HCT116 (cell line): ENCODE measurements at regions of chr1 and their contacts with region 1.

Region 1: GRCh38 chr1:34742667-34743270 is 12.1 kb upstream of the GJB5 start:
- DNase-seq: peak; percentile 59
- ATAC-seq: peak; percentile 99
- H3K4me3 ChIP-seq: no peak overlapping the region
- H3K27ac ChIP-seq: no peak overlapping the region
- H3K4me1 ChIP-seq: peaks cover 3 to 13% of the 10 kb centered on the region in 2 experiments; a peak in 3 of 4 replicates
- H3K27me3 ChIP-seq: no peaks in the 10 kb centered on the region
- CTCF ChIP-seq: peak; percentile 88 to 96 (median 94)
- POLR2A ChIP-seq: no peak
- RAD21 ChIP-seq: peak; percentile 99

Region 2: DNA sequence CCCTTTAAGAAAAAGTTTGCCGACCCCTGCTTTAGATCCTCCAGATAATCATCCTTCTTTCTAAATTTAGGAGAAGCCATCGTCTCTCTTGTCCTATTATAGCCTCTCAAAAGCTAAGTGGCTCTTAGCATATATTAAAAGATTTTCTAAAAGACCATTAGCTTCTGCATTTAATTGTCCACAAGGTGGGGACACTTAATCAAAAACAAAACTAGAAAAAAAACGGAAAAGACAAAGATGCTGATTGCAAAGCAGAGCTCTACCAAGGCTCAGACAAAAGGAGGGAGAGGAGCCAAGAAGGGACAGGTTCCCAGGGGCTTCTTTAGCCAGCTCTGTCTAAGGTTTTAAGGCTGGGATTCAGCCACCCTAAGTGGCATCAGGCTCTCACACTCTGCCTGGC is 1007.1 kb before region 1 on chr1:
- CTCF ChIA-PET with region 1: interaction called, 5 read pairs
- POLR2A ChIA-PET with region 1: no interaction called
- RAD21 ChIA-PET with region 1: no interaction called
- intact Hi-C with region 1: loop called (anchors 10 kb)
- DNase-seq: peak; percentile 1
- ATAC-seq: 0 out of 2 replicates have a peak, but pooled peaks have one; percentile 32
- H3K4me3 ChIP-seq: no peak overlapping the region
- H3K27ac ChIP-seq: no peak overlapping the region
- H3K4me1 ChIP-seq: no peaks in the 10 kb centered on the region
- H3K27me3 ChIP-seq: peaks cover 69% of the 10 kb centered on the region
- CTCF ChIP-seq: peak; percentile 14 to 53 (median 37); a peak in 3 of 6 replicates
- POLR2A ChIP-seq: no peak
- RAD21 ChIP-seq: peak; percentile 60

Region 3: DNA sequence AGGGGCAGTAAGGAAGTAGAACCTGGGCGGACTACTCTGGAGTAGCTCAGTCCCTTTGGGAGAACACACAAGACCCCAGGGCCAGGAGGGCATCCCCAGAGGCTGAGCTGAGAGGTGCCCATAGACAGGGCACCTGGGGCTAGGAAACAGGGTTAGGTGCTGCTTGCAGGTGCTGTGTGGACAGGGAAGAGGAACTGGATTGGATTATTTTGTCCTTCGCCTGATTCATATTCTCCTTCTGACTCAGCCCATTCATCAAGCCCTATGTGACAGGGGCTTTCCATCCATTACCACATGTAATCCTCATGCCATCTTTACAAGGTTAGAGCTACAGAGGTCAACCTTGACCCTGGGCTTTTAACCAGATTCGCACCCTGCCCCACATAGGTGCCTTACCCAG is 382.2 kb before region 1 on chr1:
- CTCF ChIA-PET with region 1: no interaction called
- POLR2A ChIA-PET with region 1: no interaction called
- RAD21 ChIA-PET with region 1: no interaction called
- intact Hi-C with region 1: no loop called
- DNase-seq: no peak
- ATAC-seq: no peak
- H3K4me3 ChIP-seq: no peak overlapping the region
- H3K27ac ChIP-seq: no peak overlapping the region
- H3K4me1 ChIP-seq: no peaks in the 10 kb centered on the region
- H3K27me3 ChIP-seq: peaks cover 51% of the 10 kb centered on the region
- CTCF ChIP-seq: no peak
- POLR2A ChIP-seq: no peak
- RAD21 ChIP-seq: no peak

Region 4: GRCh38 chr1:34460193-34460592 is 282.6 kb before region 1 on chr1:
- CTCF ChIA-PET with region 1: interaction called, 31 read pairs
- POLR2A ChIA-PET with region 1: no interaction called
- RAD21 ChIA-PET with region 1: interaction called, 3 read pairs
- intact Hi-C with region 1: loop called (anchors 1 kb)
- DNase-seq: peak; percentile 47
- ATAC-seq: peak; percentile 90
- H3K4me3 ChIP-seq: no peak overlapping the region
- H3K27ac ChIP-seq: no peak overlapping the region
- H3K4me1 ChIP-seq: no peaks in the 10 kb centered on the region
- H3K27me3 ChIP-seq: no peaks in the 10 kb centered on the region; the same call in 1 of the 2 replicates
- CTCF ChIP-seq: peak; percentile 59 to 88 (median 75)
- POLR2A ChIP-seq: no peak
- RAD21 ChIP-seq: peak; percentile 65

Region 5: DNA sequence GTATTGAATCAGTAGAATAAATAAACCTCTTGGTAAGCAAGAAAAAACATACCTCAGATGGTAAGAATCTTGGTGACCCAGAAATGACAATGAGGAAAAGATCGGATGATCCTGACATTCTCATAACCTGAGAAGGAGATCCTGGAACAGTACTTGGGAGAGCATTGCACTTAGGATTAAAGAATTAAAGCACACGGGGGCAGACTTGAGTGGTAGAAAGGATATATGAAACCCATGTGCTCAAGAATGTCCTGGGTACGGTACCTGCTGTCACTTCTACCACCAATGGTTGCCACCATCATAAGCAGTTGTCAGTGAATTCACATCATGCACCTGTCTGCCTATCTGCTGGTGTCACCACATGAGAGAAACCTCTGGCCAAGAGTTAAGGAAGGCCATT is 96.8 kb before region 1 on chr1:
- CTCF ChIA-PET with region 1: interaction called, 6 read pairs
- POLR2A ChIA-PET with region 1: no interaction called
- RAD21 ChIA-PET with region 1: no interaction called
- intact Hi-C with region 1: loop called (anchors 1 kb)
- DNase-seq: peak; percentile 15
- ATAC-seq: peak; percentile 70
- H3K4me3 ChIP-seq: no peak overlapping the region
- H3K27ac ChIP-seq: no peak overlapping the region
- H3K4me1 ChIP-seq: no peaks in the 10 kb centered on the region
- H3K27me3 ChIP-seq: peaks cover 80% of the 10 kb centered on the region
- CTCF ChIP-seq: peak in 2 of 3 experiments; percentile 8 to 25; a peak in 1 of 6 replicates
- POLR2A ChIP-seq: no peak
- RAD21 ChIP-seq: peak; percentile 31; the same call in 1 of the 2 replicates

Region 6: DNA sequence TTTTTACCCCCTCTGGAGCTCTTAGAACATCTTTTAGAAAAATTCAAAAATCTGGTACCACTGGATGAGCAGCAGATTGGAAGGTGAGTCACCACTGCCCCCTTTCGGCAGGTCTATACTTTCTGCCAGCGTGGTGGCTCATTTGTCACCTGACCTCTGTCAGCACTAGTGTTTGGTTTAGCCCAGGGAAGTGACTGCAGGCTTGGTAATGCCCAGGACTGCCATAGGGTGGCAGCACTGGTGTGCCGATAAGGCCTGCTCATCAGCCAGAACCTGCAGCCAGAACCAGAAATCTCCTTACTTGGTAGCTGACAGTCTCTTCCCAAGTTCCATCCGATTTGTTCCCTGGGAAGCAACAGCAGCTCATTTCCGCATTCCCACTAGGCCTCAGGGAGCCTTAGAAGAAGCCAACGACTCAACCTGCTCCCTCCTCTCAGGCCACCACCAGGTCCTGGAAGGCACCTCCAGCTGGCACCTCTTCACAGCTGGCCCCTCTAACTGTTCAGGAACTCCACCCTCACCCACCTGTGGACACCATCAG is 110.0 kb after region 1 on chr1:
- CTCF ChIA-PET with region 1: interaction called, 7 read pairs
- POLR2A ChIA-PET with region 1: no interaction called
- RAD21 ChIA-PET with region 1: no interaction called
- intact Hi-C with region 1: loop called (anchors 2 kb)
- DNase-seq: peak; percentile 90
- ATAC-seq: peak; percentile 99
- H3K4me3 ChIP-seq: no peak overlapping the region
- H3K27ac ChIP-seq: peak overlapping the region; percentile 8; the same call in 1 of the 2 replicates
- H3K4me1 ChIP-seq: peaks cover 0 to 3% of the 10 kb centered on the region in 2 experiments; a peak in 1 of 4 replicates
- H3K27me3 ChIP-seq: no peaks in the 10 kb centered on the region
- CTCF ChIP-seq: peak; percentile 98 to 99 (median 98)
- POLR2A ChIP-seq: no peak
- RAD21 ChIP-seq: peak; percentile 91

Region 7: GRCh38 chr1:34930702-34931071 is 187.9 kb after region 1 on chr1:
- CTCF ChIA-PET with region 1: no interaction called
- POLR2A ChIA-PET with region 1: no interaction called
- RAD21 ChIA-PET with region 1: no interaction called
- intact Hi-C with region 1: no loop called
- DNase-seq: no peak
- ATAC-seq: no peak
- H3K4me3 ChIP-seq: no peak overlapping the region
- H3K27ac ChIP-seq: no peak overlapping the region
- H3K4me1 ChIP-seq: no peaks in the 10 kb centered on the region
- H3K27me3 ChIP-seq: peaks cover 9% of the 10 kb centered on the region; the same call in 1 of the 2 replicates
- CTCF ChIP-seq: no peak
- POLR2A ChIP-seq: no peak
- RAD21 ChIP-seq: no peak